Heart left ventricle (tissue), 16 donors: ENCODE measurements at regions of chr1 and their contacts with region 1.

Region 1: GRCh38 chr1:212558693-212559480 is 49.7 kb upstream of the ATF3 start:
- DNase-seq: peak; percentile 93 to 96 (median 95)
- ATAC-seq: peak; percentile 92 to 96 (median 94)
- H3K4me3 ChIP-seq: peak overlapping the region; percentile 52 to 84 (median 74)
- H3K27ac ChIP-seq: peak overlapping the region; percentile 79 to 98 (median 94)
- H3K4me1 ChIP-seq: peaks cover 0 to 22% (median 7%) of the 10 kb centered on the region in 12 donors
- H3K27me3 ChIP-seq: no peaks in the 10 kb centered on the region
- CTCF ChIP-seq: no peak
- POLR2A ChIP-seq: peak in 1 of 2 donors; percentile 66

Region 2: GRCh38 chr1:212482384-212483281 is 76.3 kb before region 1 on chr1:
- intact Hi-C with region 1: loop called in 5 of 10 experiments (anchors 5 to 10 kb)
- DNase-seq: no peak
- ATAC-seq: no peak
- H3K4me3 ChIP-seq: no peak overlapping the region
- H3K27ac ChIP-seq: no peak overlapping the region
- H3K4me1 ChIP-seq: peaks cover 0 to 16% (median 0%) of the 10 kb centered on the region in 12 donors
- H3K27me3 ChIP-seq: no peaks in the 10 kb centered on the region
- CTCF ChIP-seq: no peak
- POLR2A ChIP-seq: no peak

Region 3: DNA sequence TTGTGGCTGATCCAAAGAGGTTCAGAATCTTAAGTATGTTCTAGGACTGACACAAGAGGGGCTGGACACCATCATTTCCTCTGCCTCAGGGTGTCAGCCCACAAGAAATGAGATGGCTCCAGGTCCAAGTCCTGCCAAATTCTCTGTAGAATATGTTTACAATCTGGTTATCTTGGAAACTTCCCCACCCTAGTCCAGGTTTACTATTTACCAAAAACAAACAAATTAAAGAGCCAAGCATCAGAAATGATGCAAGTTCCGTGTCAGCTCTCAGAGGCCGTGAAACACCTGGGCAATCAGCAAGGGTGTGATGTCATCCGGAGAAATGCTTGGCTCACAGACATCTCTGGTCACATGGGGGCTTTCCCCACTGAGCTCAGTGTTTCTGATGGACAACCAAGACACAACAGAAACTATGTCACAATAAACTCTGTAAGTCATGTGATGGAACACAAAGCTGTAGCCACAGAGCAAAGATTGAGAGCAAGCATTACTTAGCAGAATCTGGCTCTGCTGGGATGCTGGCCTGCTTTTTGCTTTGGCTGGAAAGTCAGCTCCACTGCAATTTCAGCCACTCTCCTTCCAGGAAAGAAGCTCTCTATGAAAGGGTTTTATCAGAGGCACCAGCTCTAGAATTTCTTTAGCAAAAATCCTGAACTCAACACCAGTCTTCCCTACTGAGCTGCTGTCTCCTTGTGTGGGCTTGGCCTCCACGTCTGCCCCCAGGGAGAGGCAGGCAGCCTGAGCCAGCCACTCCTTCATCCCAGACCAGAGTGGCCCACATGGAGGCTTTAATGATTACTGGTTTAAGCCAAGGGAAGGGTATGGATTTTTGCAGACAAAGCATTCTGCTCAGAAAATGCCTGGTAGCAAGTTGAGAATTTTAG is 70.2 kb before region 1 on chr1:
- intact Hi-C with region 1: loop called in 4 of 10 experiments (anchors 5 to 10 kb)
- DNase-seq: peak in 2 of 5 donors; percentile 29 to 41
- ATAC-seq: peak; percentile 41 to 76 (median 68)
- H3K4me3 ChIP-seq: no peak overlapping the region
- H3K27ac ChIP-seq: peak overlapping the region in 3 of 12 donors; percentile 42 to 76 (median 51)
- H3K4me1 ChIP-seq: peaks cover 0 to 48% (median 8%) of the 10 kb centered on the region in 12 donors
- H3K27me3 ChIP-seq: no peaks in the 10 kb centered on the region
- CTCF ChIP-seq: no peak
- POLR2A ChIP-seq: no peak